Breast epithelium (tissue), 4 donors: ENCODE measurements at regions of chr1 and their contacts with region 1.

Region 1: GRCh38 chr1:48619523-48619931 is 147.5 kb upstream of the SPATA6 start:
- DNase-seq: no peak
- H3K4me3 ChIP-seq: no peak overlapping the region
- H3K27ac ChIP-seq: no peak overlapping the region
- H3K4me1 ChIP-seq: no peaks in the 10 kb centered on the region
- H3K27me3 ChIP-seq: no peaks in the 10 kb centered on the region
- CTCF ChIP-seq: no peak
- POLR2A ChIP-seq: no peak

Region 2: GRCh38 chr1:48596046-48596445 is 23.5 kb before region 1 on chr1:
- intact Hi-C with region 1: no loop called
- DNase-seq: peak in 1 of 2 donors; percentile 38
- H3K4me3 ChIP-seq: no peak overlapping the region
- H3K27ac ChIP-seq: peak overlapping the region; percentile 69 to 72
- H3K4me1 ChIP-seq: no peaks in the 10 kb centered on the region
- H3K27me3 ChIP-seq: no peaks in the 10 kb centered on the region
- CTCF ChIP-seq: no peak
- POLR2A ChIP-seq: no peak

Region 3: GRCh38 chr1:48665708-48666407 is 46.3 kb after region 1 on chr1:
- intact Hi-C with region 1: loop called (anchors 2 kb)
- DNase-seq: no peak
- H3K4me3 ChIP-seq: no peak overlapping the region
- H3K27ac ChIP-seq: no peak overlapping the region
- H3K4me1 ChIP-seq: no peaks in the 10 kb centered on the region
- H3K27me3 ChIP-seq: no peaks in the 10 kb centered on the region
- CTCF ChIP-seq: no peak
- POLR2A ChIP-seq: no peak